Caco-2 (cell line): ENCODE measurements at regions of chr19 and their contacts with region 1.

Region 1: GRCh38 chr19:44570984-44571684 is 41.7 kb upstream of the CEACAM20 start:
- DNase-seq: peak; percentile 73 to 83
- H3K4me3 ChIP-seq: no peak overlapping the region
- H3K4me3 Mint-ChIP-seq: no peak overlapping the region
- H3K27ac Mint-ChIP-seq: no peak overlapping the region
- H3K4me1 ChIP-seq: peaks cover 40% of the 10 kb centered on the region
- H3K4me1 Mint-ChIP-seq: peaks cover 43% of the 10 kb centered on the region
- H3K27me3 ChIP-seq: no peaks in the 10 kb centered on the region
- H3K27me3 Mint-ChIP-seq: no peaks in the 10 kb centered on the region
- CTCF ChIP-seq: peak; percentile 57 to 70

Region 2: GRCh38 chr19:44512326-44513298 is 58.5 kb before region 1 on chr19:
- CTCF ChIA-PET with region 1: no interaction called
- POLR2A ChIA-PET with region 1: no interaction called
- intact Hi-C with region 1: loop called (anchors 5 kb)
- DNase-seq: peak; percentile 63 to 75
- H3K4me3 ChIP-seq: no peak overlapping the region
- H3K4me3 Mint-ChIP-seq: no peak overlapping the region
- H3K27ac Mint-ChIP-seq: no peak overlapping the region
- H3K4me1 ChIP-seq: no peaks in the 10 kb centered on the region
- H3K4me1 Mint-ChIP-seq: no peaks in the 10 kb centered on the region
- H3K27me3 ChIP-seq: no peaks in the 10 kb centered on the region
- H3K27me3 Mint-ChIP-seq: peaks cover 19% of the 10 kb centered on the region
- CTCF ChIP-seq: peak; percentile 68 to 73

Region 3: GRCh38 chr19:44530777-44531176 is 40.4 kb before region 1 on chr19:
- CTCF ChIA-PET with region 1: no interaction called
- POLR2A ChIA-PET with region 1: no interaction called
- intact Hi-C with region 1: no loop called
- DNase-seq: no peak
- H3K4me3 ChIP-seq: no peak overlapping the region
- H3K4me3 Mint-ChIP-seq: no peak overlapping the region
- H3K27ac Mint-ChIP-seq: no peak overlapping the region
- H3K4me1 ChIP-seq: no peaks in the 10 kb centered on the region
- H3K4me1 Mint-ChIP-seq: no peaks in the 10 kb centered on the region
- H3K27me3 ChIP-seq: no peaks in the 10 kb centered on the region
- H3K27me3 Mint-ChIP-seq: peaks cover 7% of the 10 kb centered on the region
- CTCF ChIP-seq: no peak

Region 4: DNA sequence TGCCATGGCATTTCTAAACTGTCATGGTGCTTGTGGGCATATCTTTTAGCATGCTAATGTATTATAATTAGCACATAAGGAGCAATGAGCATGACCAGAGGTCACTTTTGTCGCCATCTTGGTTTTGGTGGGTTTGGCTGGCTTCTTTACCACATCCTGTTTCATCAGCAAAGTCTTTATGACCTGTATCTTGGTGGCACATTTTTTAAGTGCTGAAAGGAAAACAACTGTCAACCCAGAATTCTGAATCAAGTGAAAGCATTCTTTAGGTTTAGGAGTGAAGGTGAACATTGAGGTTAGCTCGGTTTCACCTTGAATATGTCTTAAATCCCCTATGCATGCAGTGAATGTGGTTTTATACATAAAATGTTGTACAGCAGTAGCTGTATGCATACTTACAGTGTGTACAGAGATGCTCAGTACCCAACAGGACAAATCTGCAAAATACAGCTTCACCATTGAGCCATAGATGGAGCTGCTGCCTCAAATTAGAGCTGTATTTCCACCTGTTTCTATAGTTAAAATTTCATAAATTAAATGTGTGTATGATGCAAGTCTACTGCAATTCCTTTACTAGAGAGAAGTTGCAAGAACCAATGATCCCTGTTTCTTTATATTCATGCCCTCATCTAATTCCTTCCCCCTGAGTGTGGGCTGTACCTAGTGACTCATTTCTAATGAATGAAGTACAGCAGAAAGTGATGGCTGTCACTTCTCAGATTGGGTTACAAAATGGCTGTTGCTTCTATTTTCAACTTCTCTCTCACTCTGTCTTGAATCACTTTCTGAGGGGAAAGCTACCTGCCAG is 17.0 kb after region 1 on chr19:
- CTCF ChIA-PET with region 1: interaction called, 20 read pairs
- POLR2A ChIA-PET with region 1: no interaction called
- intact Hi-C with region 1: no loop called
- DNase-seq: peak in 1 of 2 experiments; percentile 72
- H3K4me3 ChIP-seq: no peak overlapping the region
- H3K4me3 Mint-ChIP-seq: peak overlapping the region; percentile 67
- H3K27ac Mint-ChIP-seq: peak overlapping the region; percentile 99
- H3K4me1 ChIP-seq: peaks cover 57% of the 10 kb centered on the region
- H3K4me1 Mint-ChIP-seq: peaks cover 58% of the 10 kb centered on the region
- H3K27me3 ChIP-seq: no peaks in the 10 kb centered on the region
- H3K27me3 Mint-ChIP-seq: no peaks in the 10 kb centered on the region
- CTCF ChIP-seq: no peak

Region 5: GRCh38 chr19:44626048-44626624 is 55.0 kb after region 1 on chr19:
- CTCF ChIA-PET with region 1: interaction called, 13 read pairs
- POLR2A ChIA-PET with region 1: no interaction called
- intact Hi-C with region 1: no loop called
- DNase-seq: no peak
- H3K4me3 ChIP-seq: no peak overlapping the region
- H3K4me3 Mint-ChIP-seq: no peak overlapping the region
- H3K27ac Mint-ChIP-seq: peak overlapping the region; percentile 37
- H3K4me1 ChIP-seq: peaks cover 21% of the 10 kb centered on the region
- H3K4me1 Mint-ChIP-seq: peaks cover 16% of the 10 kb centered on the region
- H3K27me3 ChIP-seq: no peaks in the 10 kb centered on the region
- H3K27me3 Mint-ChIP-seq: no peaks in the 10 kb centered on the region
- CTCF ChIP-seq: no peak

Region 6: GRCh38 chr19:44689056-44689895 is 118.1 kb after region 1 on chr19:
- CTCF ChIA-PET with region 1: interaction called, 10 read pairs
- POLR2A ChIA-PET with region 1: no interaction called
- intact Hi-C with region 1: no loop called
- DNase-seq: peak; percentile 85 to 89
- H3K4me3 ChIP-seq: no peak overlapping the region
- H3K4me3 Mint-ChIP-seq: peak overlapping the region; percentile 7
- H3K27ac Mint-ChIP-seq: peak overlapping the region; percentile 5
- H3K4me1 ChIP-seq: peaks cover 31% of the 10 kb centered on the region
- H3K4me1 Mint-ChIP-seq: peaks cover 24% of the 10 kb centered on the region
- H3K27me3 ChIP-seq: no peaks in the 10 kb centered on the region
- H3K27me3 Mint-ChIP-seq: no peaks in the 10 kb centered on the region
- CTCF ChIP-seq: peak; percentile 97 to 99